ENCODE measurements at regions of chrX and their contacts with region 1.

Region 1: GRCh38 chrX:115147220-115147619 is 42.0 kb upstream of the RBMXL3 start:
- DNase-seq: no peak
- ATAC-seq: no peak
- H3K4me3 ChIP-seq: no peak overlapping the region
- H3K27ac ChIP-seq: no peak overlapping the region
- H3K4me1 ChIP-seq: no peaks in the 10 kb centered on the region
- H3K27me3 ChIP-seq: peaks cover 0 to 23% (median 0%) of the 10 kb centered on the region in 7 donors
- CTCF ChIP-seq: peak in 8 of 9 donors; percentile 22 to 69 (median 54)

Region 2: GRCh38 chrX:114611018-114611619 is 536.1 kb before region 1 on chrX:
- intact Hi-C with region 1: loop called in 3 of 10 experiments (anchors 5 to 10 kb)
- DNase-seq: peak in 1 of 2 donors; percentile 3
- ATAC-seq: no peak
- H3K4me3 ChIP-seq: no peak overlapping the region
- H3K27ac ChIP-seq: no peak overlapping the region
- H3K4me1 ChIP-seq: no peaks in the 10 kb centered on the region
- H3K27me3 ChIP-seq: peaks cover 0 to 23% (median 0%) of the 10 kb centered on the region in 7 donors
- CTCF ChIP-seq: peak; percentile 40 to 81 (median 67)

Region 3: GRCh38 chrX:114619874-114620273 is 527.3 kb before region 1 on chrX:
- intact Hi-C with region 1: loop called in 3 of 10 experiments (anchors 5 to 10 kb)
- DNase-seq: no peak
- ATAC-seq: no peak
- H3K4me3 ChIP-seq: no peak overlapping the region
- H3K27ac ChIP-seq: no peak overlapping the region
- H3K4me1 ChIP-seq: no peaks in the 10 kb centered on the region
- H3K27me3 ChIP-seq: peaks cover 0 to 30% (median 0%) of the 10 kb centered on the region in 7 donors
- CTCF ChIP-seq: peak in 6 of 9 donors; percentile 10 to 48 (median 32)

Region 4: DNA sequence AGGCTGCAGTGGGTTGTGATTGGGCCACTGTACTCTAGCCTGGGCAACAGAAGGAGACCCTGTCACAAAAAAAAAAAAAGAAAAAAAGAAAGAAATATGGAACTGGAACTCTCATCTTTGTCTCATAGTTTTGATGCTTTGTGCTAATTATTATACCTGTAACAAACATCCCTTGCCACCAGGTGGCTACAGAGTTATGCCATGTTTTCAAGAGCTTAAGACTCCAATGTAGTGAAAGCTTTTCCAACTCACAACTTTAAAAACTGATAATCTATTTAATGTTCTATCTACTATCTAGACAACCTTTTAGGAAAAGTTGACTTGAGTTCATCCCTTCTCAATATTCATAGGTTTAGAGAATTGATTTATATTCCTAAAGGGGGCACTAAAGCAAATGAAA is 520.9 kb before region 1 on chrX:
- intact Hi-C with region 1: loop called in 2 of 10 experiments (anchors 5 to 10 kb)
- DNase-seq: no peak
- ATAC-seq: no peak
- H3K4me3 ChIP-seq: no peak overlapping the region
- H3K27ac ChIP-seq: no peak overlapping the region
- H3K4me1 ChIP-seq: no peaks in the 10 kb centered on the region
- H3K27me3 ChIP-seq: peaks cover 0 to 30% (median 0%) of the 10 kb centered on the region in 7 donors
- CTCF ChIP-seq: peak in 7 of 9 donors; percentile 20 to 56 (median 37)

Measured in heart right ventricle (tissue), 16 donors.